Activated naive CD4-positive, alpha-beta T cell treated with anti-CD3 and anti-CD28 coated beads for 36 hours (primary cell): ENCODE measurements at regions of chr5 and their contacts with region 1.

Region 1: GRCh38 chr5:107263387-107264018 is 407.2 kb downstream of the EFNA5 start:
- DNase-seq: peak; percentile 6
- H3K4me3 Mint-ChIP-seq: no peak overlapping the region
- H3K27ac Mint-ChIP-seq: peak overlapping the region; percentile 7
- H3K4me1 Mint-ChIP-seq: peaks cover 6% of the 10 kb centered on the region
- H3K27me3 Mint-ChIP-seq: peaks cover 6% of the 10 kb centered on the region

Region 2: DNA sequence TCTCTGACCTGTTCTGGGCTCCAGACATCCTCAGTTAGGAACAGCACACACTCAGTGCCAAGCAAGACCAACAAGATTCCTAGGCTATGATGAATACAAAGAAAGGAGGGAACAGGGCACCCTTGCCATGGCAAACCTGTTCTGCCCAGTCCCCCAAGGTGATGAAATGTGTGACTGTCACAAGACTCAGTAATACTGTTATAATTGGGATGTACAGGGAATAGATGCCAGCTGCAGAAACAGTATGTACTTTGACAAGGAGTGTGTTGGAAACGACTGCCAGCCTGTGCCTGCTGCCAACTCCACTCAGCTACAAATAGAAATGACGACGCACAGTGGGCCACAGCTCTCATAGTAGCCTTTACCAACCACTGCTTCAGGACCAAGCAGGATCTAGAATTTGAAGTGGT is 45.8 kb before region 1 on chr5:
- CTCF ChIA-PET with region 1: no interaction called
- intact Hi-C with region 1: no loop called
- DNase-seq: no peak
- H3K4me3 Mint-ChIP-seq: no peak overlapping the region
- H3K27ac Mint-ChIP-seq: no peak overlapping the region
- H3K4me1 Mint-ChIP-seq: no peaks in the 10 kb centered on the region
- H3K27me3 Mint-ChIP-seq: no peaks in the 10 kb centered on the region

Region 3: GRCh38 chr5:107289030-107289714 is 25.7 kb after region 1 on chr5:
- CTCF ChIA-PET with region 1: no interaction called
- intact Hi-C with region 1: loop called (anchors 1 kb)
- DNase-seq: peak; percentile 5
- H3K4me3 Mint-ChIP-seq: no peak overlapping the region
- H3K27ac Mint-ChIP-seq: no peak overlapping the region
- H3K4me1 Mint-ChIP-seq: peaks cover 7% of the 10 kb centered on the region
- H3K27me3 Mint-ChIP-seq: peaks cover 3% of the 10 kb centered on the region

Region 4: DNA sequence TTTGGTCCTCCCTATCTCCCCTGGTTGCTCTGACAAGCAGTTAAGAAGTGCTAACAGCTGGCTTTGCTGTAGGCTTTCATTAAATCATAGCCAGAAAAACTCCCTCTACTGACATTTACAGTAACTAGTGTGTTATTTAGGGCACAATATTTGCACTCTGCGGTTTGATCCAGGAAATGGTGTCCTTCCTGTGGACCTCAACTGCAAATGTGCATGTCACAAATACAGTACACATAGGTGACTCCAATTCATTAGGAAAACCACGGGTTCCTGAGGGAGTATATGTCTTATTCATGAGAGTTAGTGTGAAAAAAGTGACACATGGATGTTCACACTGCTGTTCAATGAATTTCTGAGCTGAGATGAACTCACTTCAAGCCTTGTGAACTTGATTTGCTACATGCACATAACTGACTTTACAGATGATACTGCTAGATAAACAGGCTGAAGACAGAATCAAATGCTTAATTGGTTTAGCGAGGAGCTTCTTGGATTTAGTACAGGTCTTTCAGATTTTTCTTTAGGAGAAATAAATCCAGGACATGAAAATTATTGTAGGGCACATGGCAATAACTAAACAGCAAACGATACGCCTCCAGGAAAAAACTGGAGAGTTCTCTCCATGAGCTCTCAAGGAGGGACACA is 125.7 kb after region 1 on chr5:
- CTCF ChIA-PET with region 1: no interaction called
- intact Hi-C with region 1: loop called (anchors 2 kb)
- DNase-seq: peak; percentile 19
- H3K4me3 Mint-ChIP-seq: no peak overlapping the region
- H3K27ac Mint-ChIP-seq: no peak overlapping the region
- H3K4me1 Mint-ChIP-seq: peaks cover 18% of the 10 kb centered on the region
- H3K27me3 Mint-ChIP-seq: no peaks in the 10 kb centered on the region

Region 5: GRCh38 chr5:107486489-107486888 is 223.0 kb after region 1 on chr5:
- CTCF ChIA-PET with region 1: no interaction called
- intact Hi-C with region 1: loop called (anchors 1 kb)
- DNase-seq: peak; percentile 60
- H3K4me3 Mint-ChIP-seq: no peak overlapping the region
- H3K27ac Mint-ChIP-seq: no peak overlapping the region
- H3K4me1 Mint-ChIP-seq: peaks cover 15% of the 10 kb centered on the region
- H3K27me3 Mint-ChIP-seq: peaks cover 6% of the 10 kb centered on the region